ENCODE measurements at regions of chr7 and their contacts with region 1.

Region 1: GRCh38 chr7:105336009-105336408 is 52.7 kb downstream of the SRPK2 start:
- DNase-seq: no peak
- H3K4me3 Mint-ChIP-seq: no peak overlapping the region
- H3K27ac Mint-ChIP-seq: no peak overlapping the region
- H3K4me1 Mint-ChIP-seq: peaks cover 15% of the 10 kb centered on the region
- H3K27me3 Mint-ChIP-seq: no peaks in the 10 kb centered on the region
- CTCF ChIP-seq: no peak

Region 2: GRCh38 chr7:103735377-103735776 is 1600.6 kb before region 1 on chr7:
- CTCF ChIA-PET with region 1: no interaction called
- intact Hi-C with region 1: no loop called
- DNase-seq: peak; percentile 24
- H3K4me3 Mint-ChIP-seq: no peak overlapping the region
- H3K27ac Mint-ChIP-seq: peak overlapping the region; percentile 42
- H3K4me1 Mint-ChIP-seq: peaks cover 19% of the 10 kb centered on the region
- H3K27me3 Mint-ChIP-seq: no peaks in the 10 kb centered on the region
- CTCF ChIP-seq: no peak

Region 3: GRCh38 chr7:104838537-104839299 is 497.3 kb before region 1 on chr7:
- CTCF ChIA-PET with region 1: no interaction called
- intact Hi-C with region 1: no loop called
- DNase-seq: no peak
- H3K4me3 Mint-ChIP-seq: no peak overlapping the region
- H3K27ac Mint-ChIP-seq: no peak overlapping the region
- H3K4me1 Mint-ChIP-seq: no peaks in the 10 kb centered on the region
- H3K27me3 Mint-ChIP-seq: peaks cover 37% of the 10 kb centered on the region
- CTCF ChIP-seq: no peak

Region 4: DNA sequence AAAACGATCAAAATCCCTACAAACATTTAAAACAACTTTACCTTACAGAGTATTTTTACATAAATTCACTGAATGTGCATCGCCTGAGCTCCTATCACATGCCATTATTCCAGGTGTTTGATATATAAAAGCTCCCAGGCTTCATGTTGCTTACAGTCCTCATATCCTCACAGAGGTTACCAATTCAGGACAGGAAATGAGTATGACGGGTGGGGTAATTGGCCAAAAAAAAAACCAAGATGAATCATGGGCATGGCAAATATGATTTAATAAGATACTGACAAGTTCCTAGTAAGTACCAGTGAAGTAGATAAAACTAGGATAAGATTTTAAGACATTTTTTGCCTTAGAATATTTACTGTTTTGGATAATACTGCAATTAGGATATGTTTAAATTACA is 186.2 kb before region 1 on chr7:
- CTCF ChIA-PET with region 1: interaction called, 10 read pairs
- intact Hi-C with region 1: loop called (anchors 5 kb)
- DNase-seq: no peak
- H3K4me3 Mint-ChIP-seq: no peak overlapping the region
- H3K27ac Mint-ChIP-seq: no peak overlapping the region
- H3K4me1 Mint-ChIP-seq: peaks cover 10% of the 10 kb centered on the region
- H3K27me3 Mint-ChIP-seq: no peaks in the 10 kb centered on the region
- CTCF ChIP-seq: no peak

Region 5: GRCh38 chr7:105429746-105430612 is 94.0 kb after region 1 on chr7:
- CTCF ChIA-PET with region 1: no interaction called
- intact Hi-C with region 1: loop called (anchors 10 kb)
- DNase-seq: peak; percentile 50
- H3K4me3 Mint-ChIP-seq: no peak overlapping the region
- H3K27ac Mint-ChIP-seq: no peak overlapping the region
- H3K4me1 Mint-ChIP-seq: peaks cover 9% of the 10 kb centered on the region
- H3K27me3 Mint-ChIP-seq: no peaks in the 10 kb centered on the region
- CTCF ChIP-seq: peak; percentile 43

Region 6: GRCh38 chr7:106089647-106090046 is 753.6 kb after region 1 on chr7:
- CTCF ChIA-PET with region 1: no interaction called
- intact Hi-C with region 1: no loop called
- DNase-seq: no peak
- H3K4me3 Mint-ChIP-seq: no peak overlapping the region
- H3K27ac Mint-ChIP-seq: no peak overlapping the region
- H3K4me1 Mint-ChIP-seq: no peaks in the 10 kb centered on the region
- H3K27me3 Mint-ChIP-seq: no peaks in the 10 kb centered on the region
- CTCF ChIP-seq: no peak

Measured in Calu3 (cell line).